ENCODE measurements at regions of chr1 and their contacts with region 1.

Region 1: GRCh38 chr1:43650310-43651085 is 549 bp downstream of the KDM4A start:
- DNase-seq: peak; percentile 93
- H3K4me3 Mint-ChIP-seq: peak overlapping the region; percentile 99
- H3K27ac Mint-ChIP-seq: peak overlapping the region; percentile 94
- H3K4me1 Mint-ChIP-seq: peaks cover 37% of the 10 kb centered on the region
- H3K27me3 Mint-ChIP-seq: peaks cover 5% of the 10 kb centered on the region

Region 2: DNA sequence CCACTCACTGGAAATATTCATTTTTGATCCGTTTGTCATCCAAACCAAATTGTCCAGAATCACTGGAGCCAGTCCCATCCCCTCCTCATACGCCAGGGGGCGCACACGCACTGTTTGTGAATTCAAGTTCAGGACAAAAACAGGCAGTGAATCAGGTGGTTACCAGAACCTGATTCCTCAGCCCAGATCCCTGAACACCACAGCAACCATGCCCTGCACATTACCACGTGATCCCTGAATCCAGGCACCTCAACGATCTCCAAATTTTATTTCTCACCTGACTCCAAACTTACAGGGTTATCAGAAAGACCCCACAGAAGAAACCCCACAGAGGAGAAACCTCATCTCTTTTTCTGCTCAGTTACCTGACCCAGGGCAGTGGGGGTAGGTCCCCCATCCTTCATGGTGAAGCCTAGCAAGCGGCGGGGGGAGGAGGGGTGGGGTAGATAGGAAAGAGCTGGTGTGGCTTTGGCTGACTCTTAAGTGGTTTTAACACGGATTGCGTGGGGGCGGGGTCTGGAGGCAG is 121.2 kb before region 1 on chr1:
- CTCF ChIA-PET with region 1: interaction called, 11 read pairs
- POLR2A ChIA-PET with region 1: interaction called, 3 read pairs
- DNase-seq: peak; percentile 81
- H3K4me3 Mint-ChIP-seq: no peak overlapping the region
- H3K27ac Mint-ChIP-seq: no peak overlapping the region
- H3K4me1 Mint-ChIP-seq: peaks cover 20% of the 10 kb centered on the region
- H3K27me3 Mint-ChIP-seq: peaks cover 54% of the 10 kb centered on the region

Region 3: DNA sequence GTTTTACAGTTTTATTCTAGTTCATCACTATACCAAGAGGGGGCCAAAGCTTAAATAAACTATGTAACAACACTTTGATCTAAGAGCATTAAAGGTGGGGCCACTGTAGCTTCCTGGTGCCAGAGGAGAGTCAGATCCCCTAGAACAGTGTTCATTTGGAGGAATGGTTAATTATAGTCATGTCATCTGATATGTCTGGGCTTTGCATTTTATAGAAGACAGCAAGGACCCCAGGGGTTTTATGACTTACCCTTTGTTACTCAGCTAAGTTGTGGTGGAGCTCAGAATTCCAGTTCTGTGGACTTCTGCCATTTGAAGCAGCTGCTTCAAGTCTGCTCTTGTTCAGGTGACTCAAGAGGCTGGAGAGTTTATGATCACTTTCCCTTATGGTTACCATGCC is 16.1 kb after region 1 on chr1:
- CTCF ChIA-PET with region 1: interaction called, 5 read pairs
- POLR2A ChIA-PET with region 1: interaction called, 17 read pairs
- DNase-seq: no peak
- H3K4me3 Mint-ChIP-seq: no peak overlapping the region
- H3K27ac Mint-ChIP-seq: no peak overlapping the region
- H3K4me1 Mint-ChIP-seq: peaks cover 2% of the 10 kb centered on the region
- H3K27me3 Mint-ChIP-seq: no peaks in the 10 kb centered on the region

Region 4: DNA sequence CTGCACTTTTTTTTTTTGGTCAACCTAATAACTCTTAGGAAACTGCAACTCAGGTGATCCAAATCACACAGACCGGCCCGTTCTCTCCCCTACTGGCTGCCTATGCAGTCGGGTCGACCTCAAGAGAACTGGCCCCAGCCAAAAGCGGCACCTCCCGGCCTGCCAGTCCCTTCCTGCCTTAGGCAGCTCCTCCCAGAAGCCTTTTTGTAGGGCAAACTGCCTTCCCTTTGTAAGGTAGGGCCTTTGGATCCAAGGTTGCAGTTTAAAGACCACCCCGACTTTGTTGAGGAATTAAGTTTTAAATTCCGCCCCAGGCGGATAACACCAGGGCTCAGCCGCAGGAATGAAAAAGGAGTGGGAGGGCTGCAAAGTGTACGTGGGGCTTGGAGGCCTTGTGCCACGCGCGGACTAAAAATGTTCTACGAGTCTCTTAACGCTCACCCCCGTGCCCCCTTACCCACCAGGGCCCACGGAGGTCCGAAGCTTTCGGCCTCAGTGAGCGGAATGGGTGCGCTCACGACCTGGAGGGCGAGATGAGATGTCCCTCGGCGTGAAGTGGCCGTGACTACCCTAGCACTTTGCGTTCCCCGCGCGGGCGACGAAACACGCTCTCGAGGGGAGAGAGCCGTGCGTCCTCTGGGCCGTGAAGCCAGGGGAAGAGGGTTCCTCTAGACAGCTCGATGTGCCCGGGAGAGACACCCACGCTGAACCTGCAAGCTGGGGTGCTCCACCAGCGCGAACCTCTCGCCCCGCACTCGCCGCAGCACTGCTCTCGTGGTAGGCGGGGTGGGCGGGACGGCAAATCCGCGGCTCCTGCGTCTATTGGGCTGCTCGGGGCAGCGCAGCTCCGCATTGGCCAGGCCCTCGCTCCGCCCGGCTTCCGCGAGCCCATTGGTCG is 56.3 kb after region 1 on chr1:
- CTCF ChIA-PET with region 1: interaction called, 6 read pairs
- POLR2A ChIA-PET with region 1: interaction called, 64 read pairs
- DNase-seq: peak; percentile 94
- H3K4me3 Mint-ChIP-seq: peak overlapping the region; percentile 91
- H3K27ac Mint-ChIP-seq: peak overlapping the region; percentile 61
- H3K4me1 Mint-ChIP-seq: peaks cover 45% of the 10 kb centered on the region
- H3K27me3 Mint-ChIP-seq: no peaks in the 10 kb centered on the region

Region 5: GRCh38 chr1:43743206-43743605 is 92.7 kb after region 1 on chr1:
- CTCF ChIA-PET with region 1: no interaction called
- POLR2A ChIA-PET with region 1: no interaction called
- DNase-seq: no peak
- H3K4me3 Mint-ChIP-seq: no peak overlapping the region
- H3K27ac Mint-ChIP-seq: no peak overlapping the region
- H3K4me1 Mint-ChIP-seq: no peaks in the 10 kb centered on the region
- H3K27me3 Mint-ChIP-seq: no peaks in the 10 kb centered on the region

Region 6: DNA sequence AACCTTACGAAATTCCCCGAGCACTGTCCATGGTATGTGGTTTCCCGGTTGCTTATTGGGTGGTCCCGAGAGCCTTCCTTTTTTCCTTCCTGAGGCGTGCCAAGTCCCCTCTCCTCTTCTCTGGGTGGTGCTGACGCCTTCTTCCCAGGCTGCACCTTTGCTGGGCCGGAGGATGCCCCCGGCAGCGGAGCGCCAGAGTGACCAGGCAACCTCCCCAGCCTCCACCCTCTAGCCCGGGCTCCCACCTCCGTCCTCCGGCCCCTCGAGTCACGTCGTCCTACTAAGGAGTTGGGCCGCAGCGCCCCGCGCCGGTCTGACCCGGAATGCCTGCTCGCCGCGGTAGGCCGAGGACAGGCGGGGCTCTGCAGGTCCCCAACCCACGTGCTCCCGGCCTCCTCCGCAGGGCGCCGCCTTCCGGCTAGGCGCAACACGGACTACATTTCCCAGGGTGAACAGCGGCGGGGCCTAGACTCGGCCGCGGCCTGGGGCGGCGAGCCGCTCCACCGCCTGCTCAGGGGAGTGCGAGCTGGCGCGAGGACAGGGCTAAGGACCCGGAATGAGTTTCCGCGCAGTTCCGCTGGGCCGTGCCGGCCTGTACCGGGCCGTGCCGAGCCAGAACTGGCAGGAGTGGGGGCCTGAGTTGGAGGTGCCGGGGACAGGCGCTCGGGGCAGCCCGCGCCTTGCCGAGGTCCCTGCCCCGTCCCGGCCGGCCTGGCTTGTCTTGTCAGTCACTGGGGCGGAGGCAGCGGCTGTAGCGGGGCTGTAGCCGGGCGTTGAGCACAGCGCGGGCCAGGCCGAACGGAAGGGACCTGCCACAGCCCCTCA is 295.9 kb after region 1 on chr1 and contains the start of gene IPO13:
- CTCF ChIA-PET with region 1: interaction called, 4 read pairs
- POLR2A ChIA-PET with region 1: interaction called, 12 read pairs
- DNase-seq: peak; percentile 96
- H3K4me3 Mint-ChIP-seq: peak within 1 kb of the TSS; percentile 89
- H3K27ac Mint-ChIP-seq: peak within 1 kb of the TSS; percentile 88
- H3K4me1 Mint-ChIP-seq: peaks cover 44% of the 10 kb centered on the region
- H3K27me3 Mint-ChIP-seq: no peaks in the 10 kb centered on the region
- total RNA-seq, gene IPO13: 21.5 to 23.5 TPM

Region 7: GRCh38 chr1:43974443-43975248 is 324.1 kb after region 1 on chr1 and contains the start of gene ATP6V0B:
- CTCF ChIA-PET with region 1: no interaction called
- POLR2A ChIA-PET with region 1: interaction called, 10 read pairs
- DNase-seq: peak; percentile 96
- H3K4me3 Mint-ChIP-seq: peak within 1 kb of the TSS; percentile 89
- H3K27ac Mint-ChIP-seq: peak within 1 kb of the TSS; percentile 80
- H3K4me1 Mint-ChIP-seq: peaks cover 63% of the 10 kb centered on the region
- H3K27me3 Mint-ChIP-seq: no peaks in the 10 kb centered on the region
- total RNA-seq, gene ATP6V0B: 121 TPM

Region 8: GRCh38 chr1:44631647-44632539 is 981.4 kb after region 1 on chr1:
- CTCF ChIA-PET with region 1: no interaction called
- POLR2A ChIA-PET with region 1: interaction called, 15 read pairs
- DNase-seq: peak; percentile 93
- H3K4me3 Mint-ChIP-seq: peak overlapping the region; percentile 90
- H3K27ac Mint-ChIP-seq: peak overlapping the region; percentile 93
- H3K4me1 Mint-ChIP-seq: peaks cover 40% of the 10 kb centered on the region
- H3K27me3 Mint-ChIP-seq: no peaks in the 10 kb centered on the region

Measured in activated CD4-positive, alpha-beta memory T cell treated with anti-CD3 and anti-CD28 coated beads, Interleukin-2, amount 10 ng/mL, durations not matched to agents 7 days and 5 days (primary cell).